Activated naive CD4-positive, alpha-beta T cell treated with anti-CD3 and anti-CD28 coated beads for 36 hours (primary cell): ENCODE measurements at regions of chr7 and their contacts with region 1.

Region 1: DNA sequence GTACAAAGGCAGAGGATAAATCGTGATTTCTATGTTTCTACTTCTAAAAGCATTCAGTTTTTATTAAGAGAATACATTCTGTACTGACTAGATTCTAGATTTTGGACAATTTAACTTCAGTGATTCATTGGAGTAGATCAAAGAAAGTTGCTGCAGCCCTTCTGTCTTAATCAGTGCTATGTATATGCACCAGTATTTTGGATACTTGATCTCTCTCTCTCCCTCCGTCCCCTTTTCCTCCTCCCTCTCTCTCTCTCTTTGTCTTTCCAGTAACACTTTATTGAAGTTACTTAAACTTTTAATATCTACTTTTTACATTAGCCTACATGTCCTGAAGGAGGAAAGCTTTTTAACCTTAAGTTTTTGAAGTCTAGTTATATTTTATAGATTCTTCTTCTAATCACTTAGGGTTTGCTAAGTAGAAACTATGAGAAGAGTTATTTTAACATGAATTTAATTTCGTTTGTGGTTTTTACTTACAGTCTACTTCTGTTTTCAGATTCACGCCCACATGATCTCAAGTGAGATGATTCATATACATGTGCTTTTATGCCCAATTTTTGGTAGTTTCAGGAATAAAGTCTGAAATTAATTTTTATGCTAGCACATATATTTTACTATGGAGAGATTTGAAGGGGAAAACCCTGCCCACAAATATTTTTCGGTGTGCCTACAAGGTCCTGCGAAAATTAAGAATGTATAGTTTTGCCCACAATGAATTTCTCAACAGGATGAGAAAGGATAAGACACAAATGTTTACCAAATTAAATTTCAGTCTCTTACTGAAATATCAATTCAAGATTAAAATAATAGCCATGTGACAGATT is 9.1 kb downstream of the MDFIC start:
- DNase-seq: no peak
- H3K4me3 Mint-ChIP-seq: peak overlapping the region; percentile 63
- H3K27ac Mint-ChIP-seq: no peak overlapping the region
- H3K4me1 Mint-ChIP-seq: peaks cover 58% of the 10 kb centered on the region
- H3K27me3 Mint-ChIP-seq: no peaks in the 10 kb centered on the region

Region 2: DNA sequence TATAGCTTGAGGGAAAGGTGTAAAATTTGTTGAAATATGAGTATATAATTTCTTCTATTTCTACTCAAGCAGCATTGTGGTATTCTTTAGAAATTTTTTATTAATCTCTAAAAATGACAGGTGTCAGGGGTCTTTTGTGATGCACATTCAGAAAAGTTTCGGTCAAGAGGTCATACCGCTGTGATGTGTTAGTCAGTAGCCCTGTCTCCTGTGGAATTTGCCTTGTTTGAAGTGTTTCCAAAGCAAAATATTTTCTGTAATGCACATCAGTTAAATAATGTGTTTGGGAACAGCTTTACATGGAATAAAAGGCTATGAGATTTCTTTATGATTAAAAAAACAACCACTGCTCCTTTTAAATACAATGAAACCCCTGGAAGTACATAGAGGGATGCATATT is 480.6 kb before region 1 on chr7:
- CTCF ChIA-PET with region 1: no interaction called
- intact Hi-C with region 1: no loop called
- DNase-seq: no peak
- H3K4me3 Mint-ChIP-seq: no peak overlapping the region
- H3K27ac Mint-ChIP-seq: no peak overlapping the region
- H3K4me1 Mint-ChIP-seq: no peaks in the 10 kb centered on the region
- H3K27me3 Mint-ChIP-seq: no peaks in the 10 kb centered on the region

Region 3: GRCh38 chr7:114799628-114800028 is 131.4 kb before region 1 on chr7:
- CTCF ChIA-PET with region 1: no interaction called
- intact Hi-C with region 1: loop called (anchors 1 kb)
- DNase-seq: peak; percentile 39
- H3K4me3 Mint-ChIP-seq: no peak overlapping the region
- H3K27ac Mint-ChIP-seq: peak overlapping the region; percentile 81
- H3K4me1 Mint-ChIP-seq: peaks cover 70% of the 10 kb centered on the region
- H3K27me3 Mint-ChIP-seq: peaks cover 13% of the 10 kb centered on the region

Region 4: DNA sequence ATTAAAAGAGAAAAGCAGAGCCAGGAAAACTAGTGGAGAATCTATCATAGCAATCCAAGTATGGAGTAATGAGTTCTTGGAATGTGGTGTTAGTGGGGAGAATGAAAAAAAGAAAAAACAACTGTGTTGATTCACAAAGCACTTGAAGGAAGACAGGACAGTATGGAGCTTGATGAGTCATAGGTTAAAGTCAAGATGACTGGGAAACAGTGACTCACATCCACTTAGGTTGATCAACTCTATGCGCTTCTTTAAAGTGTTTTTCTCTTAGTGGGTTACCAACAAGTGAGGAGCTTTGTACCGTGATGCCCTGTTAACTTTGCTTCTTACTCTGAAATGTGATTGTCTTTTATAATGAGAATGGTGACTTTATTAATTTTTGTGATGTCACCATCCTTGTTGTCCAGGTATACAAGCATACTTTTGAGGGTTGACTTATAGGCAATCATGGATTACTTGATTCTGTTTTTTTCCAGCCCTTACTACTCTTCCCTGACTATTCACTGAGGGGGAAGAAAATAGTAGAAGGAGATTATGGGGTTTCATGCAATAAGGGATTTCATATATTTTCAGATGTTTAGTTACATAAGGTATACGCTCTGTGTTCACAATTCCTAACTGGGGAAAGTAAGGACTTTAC is 41.3 kb before region 1 on chr7:
- CTCF ChIA-PET with region 1: no interaction called
- intact Hi-C with region 1: loop called (anchors 1 kb)
- DNase-seq: peak; percentile 35
- H3K4me3 Mint-ChIP-seq: no peak overlapping the region
- H3K27ac Mint-ChIP-seq: peak overlapping the region; percentile 87
- H3K4me1 Mint-ChIP-seq: peaks cover 43% of the 10 kb centered on the region
- H3K27me3 Mint-ChIP-seq: no peaks in the 10 kb centered on the region

Region 5: DNA sequence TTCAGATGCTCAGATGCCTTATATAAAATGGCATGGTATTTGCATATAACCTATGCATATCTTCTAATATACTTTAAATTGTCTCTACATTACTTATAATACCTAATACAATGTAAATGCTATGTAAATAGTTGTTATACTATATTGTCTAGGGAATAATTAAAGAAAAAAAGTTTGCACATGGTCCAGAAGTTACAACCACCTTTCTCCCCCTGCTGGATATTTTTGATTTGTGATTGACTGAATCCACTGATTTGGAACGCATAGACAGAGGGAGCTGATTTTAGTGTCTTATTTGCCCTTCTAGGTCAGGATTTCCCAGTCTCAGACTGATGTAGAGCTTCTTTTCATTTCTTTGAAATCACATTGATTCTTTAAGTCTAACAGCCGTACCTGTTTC is 22.7 kb after region 1 on chr7:
- CTCF ChIA-PET with region 1: interaction called, 3 read pairs
- intact Hi-C with region 1: loop called (anchors 1 kb)
- DNase-seq: no peak
- H3K4me3 Mint-ChIP-seq: no peak overlapping the region
- H3K27ac Mint-ChIP-seq: no peak overlapping the region
- H3K4me1 Mint-ChIP-seq: peaks cover 52% of the 10 kb centered on the region
- H3K27me3 Mint-ChIP-seq: no peaks in the 10 kb centered on the region

Region 6: DNA sequence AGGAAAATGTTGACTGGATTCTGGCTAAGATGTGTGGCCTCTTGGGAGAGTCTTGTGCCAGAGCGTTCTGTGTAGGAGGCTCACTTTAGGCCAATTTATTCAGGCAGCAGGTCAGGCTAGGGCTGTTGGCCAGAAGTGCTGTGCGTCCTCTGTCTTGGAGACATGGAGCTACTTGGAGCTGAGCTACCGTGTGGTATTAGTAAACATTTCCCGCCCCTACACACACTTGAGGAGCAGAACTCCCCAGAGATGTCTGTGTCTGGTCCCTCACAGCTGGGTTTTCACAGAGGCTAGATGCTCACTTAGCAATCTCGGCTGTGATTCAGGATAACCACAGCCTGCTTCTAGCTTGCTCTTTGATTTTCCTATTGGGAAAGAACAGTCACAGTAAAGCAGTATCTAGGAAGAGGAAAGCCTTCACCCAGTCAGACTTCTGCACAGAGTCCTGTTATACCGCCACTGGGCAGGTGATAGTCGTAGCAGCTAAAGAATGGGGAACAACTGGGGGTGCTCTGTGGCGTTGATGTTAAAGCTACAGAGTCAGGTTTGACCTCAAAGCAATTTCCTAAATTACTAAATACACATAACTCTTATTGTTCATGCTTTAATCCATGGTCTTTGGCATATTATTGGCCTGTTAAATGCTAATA is 77.5 kb after region 1 on chr7:
- CTCF ChIA-PET with region 1: no interaction called
- intact Hi-C with region 1: loop called (anchors 2 kb)
- DNase-seq: peak; percentile 18
- H3K4me3 Mint-ChIP-seq: peak overlapping the region; percentile 20
- H3K27ac Mint-ChIP-seq: peak overlapping the region; percentile 74
- H3K4me1 Mint-ChIP-seq: peaks cover 74% of the 10 kb centered on the region
- H3K27me3 Mint-ChIP-seq: no peaks in the 10 kb centered on the region

Region 7: DNA sequence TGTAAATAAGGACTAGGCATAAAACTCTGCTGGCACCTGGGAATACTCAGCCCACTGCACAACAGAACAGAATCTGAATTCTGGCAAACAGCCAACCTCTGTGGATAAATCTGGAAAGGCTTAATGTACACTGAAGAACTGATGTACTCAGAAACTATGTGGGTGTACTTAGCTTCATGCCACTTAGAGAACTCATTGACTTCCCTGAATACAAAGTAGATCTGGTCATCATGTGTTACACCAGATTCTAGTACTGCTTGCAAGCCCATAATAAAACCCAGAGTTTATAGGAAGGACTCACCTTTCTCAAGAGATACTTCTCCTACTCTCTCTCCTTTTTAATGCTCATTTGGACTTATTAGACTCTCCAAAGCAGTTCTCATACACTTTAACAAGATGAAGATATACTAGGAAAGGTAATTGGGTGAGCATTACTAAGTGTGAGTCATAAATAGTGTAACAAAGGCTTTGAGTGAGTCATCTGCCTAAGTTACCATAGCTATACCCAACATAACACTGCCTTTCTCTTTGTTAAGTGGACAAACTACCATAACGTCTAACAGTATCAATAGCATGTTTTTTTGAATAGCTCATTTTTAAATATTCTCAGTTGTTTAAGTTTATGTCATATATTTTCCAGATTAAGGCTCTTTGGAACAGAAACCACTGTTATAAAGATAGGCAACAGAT is 300.0 kb after region 1 on chr7:
- CTCF ChIA-PET with region 1: no interaction called
- intact Hi-C with region 1: loop called (anchors 5 kb)
- DNase-seq: no peak
- H3K4me3 Mint-ChIP-seq: no peak overlapping the region
- H3K27ac Mint-ChIP-seq: peak overlapping the region; percentile 19
- H3K4me1 Mint-ChIP-seq: peaks cover 18% of the 10 kb centered on the region
- H3K27me3 Mint-ChIP-seq: peaks cover 6% of the 10 kb centered on the region

Region 8: GRCh38 chr7:115582956-115583355 is 651.9 kb after region 1 on chr7:
- CTCF ChIA-PET with region 1: no interaction called
- intact Hi-C with region 1: no loop called
- DNase-seq: no peak
- H3K4me3 Mint-ChIP-seq: no peak overlapping the region
- H3K27ac Mint-ChIP-seq: no peak overlapping the region
- H3K4me1 Mint-ChIP-seq: no peaks in the 10 kb centered on the region
- H3K27me3 Mint-ChIP-seq: peaks cover 4% of the 10 kb centered on the region